ENCODE measurements at regions of chr11 and their contacts with region 1.

Region 1: DNA sequence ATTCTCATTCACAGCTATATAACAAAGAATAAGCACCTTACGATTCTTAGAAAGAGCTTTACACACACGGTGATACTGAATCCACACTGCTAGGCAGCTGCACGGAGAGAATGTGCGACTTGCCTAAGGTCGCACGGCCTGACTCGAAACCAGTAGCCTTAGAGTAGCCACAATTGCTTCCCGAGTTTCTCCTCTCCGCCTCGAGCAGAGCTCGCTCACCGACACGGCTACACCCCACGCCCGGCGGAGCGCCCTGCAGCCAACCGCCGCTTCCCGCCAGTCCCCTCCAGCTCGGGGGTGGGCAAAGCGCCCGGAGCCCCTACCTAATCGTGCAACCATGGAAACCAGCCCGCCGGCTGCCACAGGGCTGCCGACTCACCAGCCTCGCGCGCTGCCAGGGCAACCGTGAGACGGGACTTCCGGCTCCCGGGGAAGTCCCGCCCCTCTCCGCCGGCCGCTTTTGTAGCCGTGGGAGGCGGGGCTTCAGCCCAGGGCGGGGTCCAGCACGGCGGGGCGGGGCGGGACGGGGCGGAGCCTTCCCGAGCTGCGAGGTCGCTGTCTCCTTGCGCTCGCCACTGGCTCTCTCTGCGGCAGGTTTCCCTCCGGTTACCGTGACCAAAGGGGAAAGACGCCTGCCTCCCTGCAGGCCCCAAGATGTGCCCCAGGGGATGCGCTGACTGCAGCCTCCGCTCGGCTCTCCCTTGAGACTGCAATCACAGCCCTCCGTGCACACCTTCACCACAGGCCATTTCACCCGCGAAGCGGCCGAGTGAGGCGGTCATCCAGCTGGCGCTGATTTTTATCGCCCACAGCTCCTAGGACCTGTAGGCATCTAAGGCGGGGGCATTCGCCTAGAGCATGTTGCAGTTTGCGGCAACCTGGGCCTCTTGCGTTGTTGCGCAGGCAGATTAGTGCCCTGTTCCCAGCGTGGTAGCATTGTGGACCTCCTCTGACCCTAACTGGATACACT is 1.1 kb downstream of the BSCL2 start:
- DNase-seq: peak; percentile 95
- ATAC-seq: peak; percentile 73
- H3K4me3 ChIP-seq: peak overlapping the region; percentile 65 to 86 (median 69)
- H3K4me3 Mint-ChIP-seq: peak overlapping the region; percentile 92
- H3K27ac ChIP-seq: peak overlapping the region; percentile 61 to 91
- H3K27ac Mint-ChIP-seq: peak overlapping the region; percentile 91
- H3K4me1 ChIP-seq: peaks cover 39 to 50% of the 10 kb centered on the region in 2 donors
- H3K4me1 Mint-ChIP-seq: peaks cover 51% of the 10 kb centered on the region
- H3K27me3 ChIP-seq: no peaks in the 10 kb centered on the region
- H3K27me3 Mint-ChIP-seq: no peaks in the 10 kb centered on the region
- CTCF ChIP-seq: no peak

Region 2: GRCh38 chr11:62573592-62574362 is 132.4 kb before region 1 on chr11 and contains the start of gene EEF1G:
- CTCF ChIA-PET with region 1: no interaction called
- POLR2A ChIA-PET with region 1: interaction called, 8 read pairs
- intact Hi-C with region 1: loop called (anchors 5 kb)
- DNase-seq: peak; percentile 99
- ATAC-seq: peak; percentile 93
- H3K4me3 ChIP-seq: peak within 1 kb of the TSS; percentile 74 to 99 (median 80)
- H3K4me3 Mint-ChIP-seq: peak within 1 kb of the TSS; percentile 92
- H3K27ac ChIP-seq: peak within 1 kb of the TSS; percentile 84 to 88
- H3K27ac Mint-ChIP-seq: peak within 1 kb of the TSS; percentile 95
- H3K4me1 ChIP-seq: peaks cover 12 to 25% of the 10 kb centered on the region in 2 donors
- H3K4me1 Mint-ChIP-seq: peaks cover 50% of the 10 kb centered on the region
- H3K27me3 ChIP-seq: no peaks in the 10 kb centered on the region
- H3K27me3 Mint-ChIP-seq: no peaks in the 10 kb centered on the region
- CTCF ChIP-seq: no peak
- total RNA-seq, gene EEF1G: 1,778 and 1,867 TPM in 2 replicates

Region 3: GRCh38 chr11:62621567-62622470 is 84.3 kb before region 1 on chr11 and contains the start of gene B3GAT3:
- CTCF ChIA-PET with region 1: no interaction called
- POLR2A ChIA-PET with region 1: interaction called, 3 read pairs
- intact Hi-C with region 1: loop called (anchors 1 kb)
- DNase-seq: peak; percentile 99
- ATAC-seq: peak; percentile 92
- H3K4me3 ChIP-seq: peak within 1 kb of the TSS; percentile 80 to 93 (median 88)
- H3K4me3 Mint-ChIP-seq: peak within 1 kb of the TSS; percentile 98
- H3K27ac ChIP-seq: peak within 1 kb of the TSS; percentile 88 to 98
- H3K27ac Mint-ChIP-seq: peak within 1 kb of the TSS; percentile 95
- H3K4me1 ChIP-seq: peaks cover 11 to 19% of the 10 kb centered on the region in 2 donors
- H3K4me1 Mint-ChIP-seq: peaks cover 23% of the 10 kb centered on the region
- H3K27me3 ChIP-seq: no peaks in the 10 kb centered on the region
- H3K27me3 Mint-ChIP-seq: no peaks in the 10 kb centered on the region
- CTCF ChIP-seq: no peak
- total RNA-seq, gene B3GAT3: 63.1 and 66.6 TPM in 2 replicates

Region 4: GRCh38 chr11:62665075-62665598 is 41.0 kb before region 1 on chr11 and contains the starts of genes C11orf98 and CSKMT:
- CTCF ChIA-PET with region 1: interaction called, 3 read pairs
- POLR2A ChIA-PET with region 1: interaction called, 14 read pairs
- intact Hi-C with region 1: loop called (anchors 1 kb)
- DNase-seq: peak; percentile 95
- ATAC-seq: peak; percentile 90
- H3K4me3 ChIP-seq: peak within 1 kb of the TSS; percentile 79 to 98 (median 91)
- H3K4me3 Mint-ChIP-seq: peak within 1 kb of the TSS; percentile 97
- H3K27ac ChIP-seq: peak within 1 kb of the TSS; percentile 73 to 81
- H3K27ac Mint-ChIP-seq: peak within 1 kb of the TSS; percentile 93
- H3K4me1 ChIP-seq: peaks cover 17 to 35% of the 10 kb centered on the region in 2 donors
- H3K4me1 Mint-ChIP-seq: peaks cover 45% of the 10 kb centered on the region
- H3K27me3 ChIP-seq: no peaks in the 10 kb centered on the region
- H3K27me3 Mint-ChIP-seq: no peaks in the 10 kb centered on the region
- CTCF ChIP-seq: no peak
- total RNA-seq, gene C11orf98: 48.1 and 52.0 TPM in 2 replicates
- total RNA-seq, gene CSKMT: 57.3 and 78.7 TPM in 2 replicates

Region 5: DNA sequence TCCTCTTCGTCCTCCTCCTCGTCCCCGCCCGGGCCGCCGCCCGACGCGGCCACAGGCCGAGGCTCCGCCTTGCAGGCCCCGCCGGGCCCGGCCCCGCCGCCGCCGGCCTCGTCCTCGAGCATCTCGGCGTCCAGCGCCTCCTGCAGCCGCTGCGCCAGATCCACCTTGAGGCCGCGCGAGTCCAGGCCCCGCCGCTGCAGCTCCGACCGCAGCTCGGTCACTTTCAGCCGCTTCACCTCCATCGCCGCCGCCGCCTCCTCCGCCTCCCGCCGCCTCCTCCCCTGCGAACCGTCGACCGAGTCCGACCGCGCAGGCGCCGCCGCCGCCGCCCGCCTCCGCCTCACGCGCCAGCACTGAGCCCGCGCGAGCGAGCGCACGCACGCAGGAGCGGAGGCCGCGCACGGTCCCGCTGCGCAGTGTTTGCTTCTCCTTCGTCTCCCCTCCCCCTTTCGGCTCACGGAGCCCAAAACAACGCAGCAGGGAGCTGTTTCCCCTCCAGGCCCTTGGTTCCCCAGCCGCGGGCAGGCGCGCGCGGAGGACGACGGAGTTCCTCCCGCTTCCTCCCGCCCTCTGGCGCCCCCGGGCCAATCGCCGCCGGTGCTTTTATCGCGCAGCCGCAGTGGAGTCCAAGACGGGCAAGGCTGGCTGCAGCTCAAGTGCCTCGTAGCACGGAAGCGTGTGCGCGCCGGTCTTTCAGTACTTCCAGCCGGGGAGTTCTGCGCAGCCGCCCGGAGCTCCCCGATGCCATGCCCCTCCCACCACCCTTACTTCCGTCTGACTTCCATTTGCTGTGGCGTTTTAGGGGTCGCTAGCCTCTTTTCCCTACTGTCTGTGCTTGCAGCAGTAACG is 21.0 kb after region 1 on chr11 and contains the start of gene HNRNPUL2:
- CTCF ChIA-PET with region 1: interaction called, 5 read pairs
- POLR2A ChIA-PET with region 1: interaction called, 66 read pairs
- intact Hi-C with region 1: loop called (anchors 1 kb)
- DNase-seq: peak; percentile 99
- ATAC-seq: peak; percentile 79
- H3K4me3 ChIP-seq: peak within 1 kb of the TSS; percentile 96 to 100 (median 99)
- H3K4me3 Mint-ChIP-seq: peak within 1 kb of the TSS; percentile 95
- H3K27ac ChIP-seq: peak within 1 kb of the TSS; percentile 90 to 91
- H3K27ac Mint-ChIP-seq: peak within 1 kb of the TSS; percentile 99
- H3K4me1 ChIP-seq: peaks cover 37 to 41% of the 10 kb centered on the region in 2 donors
- H3K4me1 Mint-ChIP-seq: peaks cover 53% of the 10 kb centered on the region
- H3K27me3 ChIP-seq: no peaks in the 10 kb centered on the region
- H3K27me3 Mint-ChIP-seq: no peaks in the 10 kb centered on the region
- CTCF ChIP-seq: no peak
- total RNA-seq, gene HNRNPUL2: 70.4 and 78.2 TPM in 2 replicates

Region 6: DNA sequence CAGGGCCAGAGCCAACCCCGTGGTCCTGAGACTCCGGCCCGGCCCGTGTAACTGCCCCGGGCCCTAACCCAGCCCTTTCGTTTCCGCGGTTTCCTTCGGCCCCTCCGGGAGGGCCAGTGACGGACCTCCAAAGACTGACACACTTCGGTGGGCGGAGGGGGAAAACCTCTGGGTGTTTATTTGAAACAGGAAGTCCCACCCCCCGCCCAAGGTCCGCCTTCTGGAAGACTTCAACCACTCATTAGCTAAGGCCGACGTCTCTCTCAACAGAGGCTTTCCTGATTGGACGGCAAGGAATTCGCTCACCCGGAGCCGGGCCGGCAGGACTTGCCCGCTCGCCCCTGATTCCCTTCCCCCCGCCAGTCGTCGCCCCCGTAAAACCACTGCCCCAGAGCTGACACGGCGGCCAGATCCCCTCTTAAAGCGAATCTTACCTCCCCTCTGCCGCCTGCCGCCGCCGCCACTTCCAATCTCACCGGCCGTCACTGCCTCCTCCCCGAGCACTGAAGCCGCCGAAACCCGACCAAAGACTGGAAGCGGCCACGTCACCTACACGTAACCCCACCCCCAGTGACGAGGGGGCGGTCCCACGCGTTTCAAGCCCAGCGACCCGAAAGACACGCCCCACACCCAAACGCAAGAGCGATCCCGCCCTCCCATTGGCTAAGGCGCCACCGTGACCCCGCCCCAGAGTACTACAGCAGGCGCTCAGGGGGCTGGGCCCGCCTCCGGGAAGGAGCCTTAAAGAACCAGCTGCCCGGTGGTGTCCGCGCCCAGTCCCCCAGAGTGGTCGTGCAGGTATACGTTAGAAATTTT is 125.6 kb after region 1 on chr11 and contains the start of gene STX5:
- CTCF ChIA-PET with region 1: no interaction called
- POLR2A ChIA-PET with region 1: interaction called, 10 read pairs
- intact Hi-C with region 1: loop called (anchors 2 kb)
- DNase-seq: peak; percentile 100
- ATAC-seq: peak; percentile 95
- H3K4me3 ChIP-seq: peak within 1 kb of the TSS; percentile 69 to 96 (median 92)
- H3K4me3 Mint-ChIP-seq: peak within 1 kb of the TSS; percentile 92
- H3K27ac ChIP-seq: peak within 1 kb of the TSS; percentile 96 to 99
- H3K27ac Mint-ChIP-seq: peak within 1 kb of the TSS; percentile 97
- H3K4me1 ChIP-seq: peaks cover 16 to 30% of the 10 kb centered on the region in 2 donors
- H3K4me1 Mint-ChIP-seq: peaks cover 43% of the 10 kb centered on the region
- H3K27me3 ChIP-seq: no peaks in the 10 kb centered on the region
- H3K27me3 Mint-ChIP-seq: no peaks in the 10 kb centered on the region
- CTCF ChIP-seq: no peak
- total RNA-seq, gene STX5: 98.1 and 99.1 TPM in 2 replicates

Region 7: DNA sequence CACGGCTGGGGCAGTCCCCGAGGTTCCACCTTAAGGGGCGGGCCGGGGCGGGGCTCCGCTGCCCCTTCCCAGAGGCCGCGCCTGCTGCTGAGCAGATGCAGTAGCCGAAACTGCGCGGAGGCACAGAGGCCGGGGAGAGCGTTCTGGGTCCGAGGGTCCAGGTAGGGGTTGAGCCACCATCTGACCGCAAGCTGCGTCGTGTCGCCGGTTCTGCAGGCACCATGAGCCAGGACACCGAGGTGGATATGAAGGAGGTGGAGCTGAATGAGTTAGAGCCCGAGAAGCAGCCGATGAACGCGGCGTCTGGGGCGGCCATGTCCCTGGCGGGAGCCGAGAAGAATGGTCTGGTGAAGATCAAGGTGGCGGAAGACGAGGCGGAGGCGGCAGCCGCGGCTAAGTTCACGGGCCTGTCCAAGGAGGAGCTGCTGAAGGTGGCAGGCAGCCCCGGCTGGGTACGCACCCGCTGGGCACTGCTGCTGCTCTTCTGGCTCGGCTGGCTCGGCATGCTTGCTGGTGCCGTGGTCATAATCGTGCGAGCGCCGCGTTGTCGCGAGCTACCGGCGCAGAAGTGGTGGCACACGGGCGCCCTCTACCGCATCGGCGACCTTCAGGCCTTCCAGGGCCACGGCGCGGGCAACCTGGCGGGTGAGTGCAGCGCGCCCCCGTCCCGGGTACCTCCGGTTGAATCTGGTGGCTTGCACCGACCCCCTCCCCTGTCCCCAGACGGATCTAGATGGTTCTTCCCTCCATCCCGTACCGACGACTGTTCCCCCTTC is 174.8 kb after region 1 on chr11 and contains the start of gene SLC3A2:
- CTCF ChIA-PET with region 1: interaction called, 4 read pairs
- POLR2A ChIA-PET with region 1: interaction called, 4 read pairs
- intact Hi-C with region 1: loop called (anchors 2 kb)
- DNase-seq: peak; percentile 93
- ATAC-seq: peak; percentile 77
- H3K4me3 ChIP-seq: peak within 1 kb of the TSS; percentile 66 to 93 (median 78)
- H3K4me3 Mint-ChIP-seq: peak within 1 kb of the TSS; percentile 100
- H3K27ac ChIP-seq: peak within 1 kb of the TSS; percentile 86 to 90
- H3K27ac Mint-ChIP-seq: peak within 1 kb of the TSS; percentile 100
- H3K4me1 ChIP-seq: peaks cover 25 to 36% of the 10 kb centered on the region in 2 donors
- H3K4me1 Mint-ChIP-seq: peaks cover 39% of the 10 kb centered on the region
- H3K27me3 ChIP-seq: no peaks in the 10 kb centered on the region
- H3K27me3 Mint-ChIP-seq: no peaks in the 10 kb centered on the region
- CTCF ChIP-seq: peak; percentile 87
- total RNA-seq, gene SLC3A2: 148 and 175 TPM in 2 replicates

Measured in B cell (primary cell).